IMR-90 (cell line): ENCODE measurements at regions of chrX and their contacts with region 1.

Region 1: GRCh38 chrX:80808160-80808735 is 1.4 kb downstream of the BRWD3 start:
- DNase-seq: peak; percentile 67
- ATAC-seq: peak; percentile 61
- H3K4me3 ChIP-seq: peak overlapping the region; percentile 100
- H3K27ac ChIP-seq: peak overlapping the region; percentile 99
- H3K4me1 ChIP-seq: no peaks in the 10 kb centered on the region
- H3K27me3 ChIP-seq: no peaks in the 10 kb centered on the region
- CTCF ChIP-seq: no peak
- POLR2A ChIP-seq: no peak
- RAD21 ChIP-seq: no peak

Region 2: DNA sequence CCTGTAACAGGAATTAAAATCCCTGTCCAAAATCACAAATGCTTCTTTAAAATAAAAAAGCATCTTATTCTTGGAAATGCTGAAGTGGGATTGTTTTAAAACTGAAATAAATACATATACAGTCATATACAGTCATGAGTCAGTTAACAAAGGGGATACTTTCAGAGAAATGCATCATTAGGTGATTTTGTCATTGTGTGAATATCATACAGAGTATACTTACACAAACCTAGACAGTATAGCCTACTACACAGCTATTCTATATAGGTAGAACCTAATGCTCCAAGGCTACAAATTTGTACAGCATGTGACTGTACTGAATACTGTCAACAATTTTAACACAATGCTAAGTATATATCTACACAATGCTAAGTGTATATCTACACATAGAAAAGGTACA is 102.9 kb before region 1 on chrX:
- CTCF ChIA-PET with region 1: no interaction called
- POLR2A ChIA-PET with region 1: no interaction called
- dilution Hi-C with region 1: no loop called
- in situ Hi-C with region 1: no loop called
- intact Hi-C with region 1: loop called (anchors 10 kb)
- DNase-seq: no peak
- ATAC-seq: no peak
- H3K4me3 ChIP-seq: no peak overlapping the region
- H3K27ac ChIP-seq: no peak overlapping the region
- H3K4me1 ChIP-seq: no peaks in the 10 kb centered on the region
- H3K27me3 ChIP-seq: no peaks in the 10 kb centered on the region
- CTCF ChIP-seq: no peak
- POLR2A ChIP-seq: no peak
- RAD21 ChIP-seq: no peak

Region 3: DNA sequence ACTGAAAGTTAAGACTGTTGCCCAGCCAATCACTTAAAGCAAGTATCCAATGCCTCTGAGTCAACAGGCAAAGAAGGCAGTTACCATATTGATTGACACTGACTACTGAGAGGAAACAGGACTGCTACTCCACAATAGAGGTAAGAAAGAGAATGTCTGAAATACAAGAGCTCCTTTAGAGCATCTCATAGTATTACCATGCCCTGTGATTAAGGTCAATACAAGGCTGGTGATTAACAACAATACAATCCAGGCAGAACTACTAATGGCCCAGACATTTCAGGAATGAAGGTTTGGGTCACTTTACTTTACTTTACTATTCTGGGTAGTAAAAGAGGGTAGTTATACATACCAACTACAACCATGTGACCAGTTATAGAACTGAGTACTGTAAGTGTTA is 43.1 kb before region 1 on chrX:
- CTCF ChIA-PET with region 1: no interaction called
- POLR2A ChIA-PET with region 1: no interaction called
- dilution Hi-C with region 1: no loop called
- in situ Hi-C with region 1: no loop called
- intact Hi-C with region 1: loop called (anchors 5 kb)
- DNase-seq: peak; percentile 77
- ATAC-seq: peak; percentile 97
- H3K4me3 ChIP-seq: no peak overlapping the region
- H3K27ac ChIP-seq: peak overlapping the region; percentile 23; the same call in 1 of the 2 replicates
- H3K4me1 ChIP-seq: no peaks in the 10 kb centered on the region
- H3K27me3 ChIP-seq: no peaks in the 10 kb centered on the region
- CTCF ChIP-seq: no peak
- POLR2A ChIP-seq: no peak
- RAD21 ChIP-seq: no peak

Region 4: DNA sequence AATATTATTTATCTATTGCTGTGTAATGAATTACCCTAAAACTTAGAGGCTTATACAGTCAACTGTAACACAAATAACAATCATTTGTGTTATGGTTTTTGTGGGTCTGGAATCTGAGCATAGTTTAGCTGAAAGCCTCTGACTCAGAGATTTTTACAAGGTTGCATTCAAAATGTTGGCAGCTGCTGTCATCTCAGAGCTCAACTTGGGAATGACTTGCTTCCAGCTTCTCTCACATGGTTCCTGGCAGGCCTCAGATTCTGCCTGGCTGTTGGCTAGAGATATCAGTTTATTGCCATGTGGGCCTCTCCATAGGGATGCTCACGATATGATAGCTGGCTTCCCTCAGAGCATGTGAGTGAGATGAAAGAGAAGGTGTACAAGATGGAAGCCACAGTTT is 71.7 kb after region 1 on chrX:
- CTCF ChIA-PET with region 1: no interaction called
- POLR2A ChIA-PET with region 1: no interaction called
- dilution Hi-C with region 1: no loop called
- in situ Hi-C with region 1: no loop called
- intact Hi-C with region 1: no loop called
- DNase-seq: peak; percentile 5
- ATAC-seq: peak; percentile 29
- H3K4me3 ChIP-seq: no peak overlapping the region
- H3K27ac ChIP-seq: no peak overlapping the region
- H3K4me1 ChIP-seq: no peaks in the 10 kb centered on the region
- H3K27me3 ChIP-seq: no peaks in the 10 kb centered on the region; the same call in 1 of the 2 replicates
- CTCF ChIP-seq: no peak
- POLR2A ChIP-seq: no peak
- RAD21 ChIP-seq: no peak

Region 5: GRCh38 chrX:81121513-81122382 is 313.5 kb after region 1 on chrX:
- CTCF ChIA-PET with region 1: no interaction called
- POLR2A ChIA-PET with region 1: no interaction called
- dilution Hi-C with region 1: no loop called
- in situ Hi-C with region 1: no loop called
- intact Hi-C with region 1: loop called (anchors 2 kb)
- DNase-seq: peak; percentile 90
- ATAC-seq: peak; percentile 96
- H3K4me3 ChIP-seq: peak overlapping the region; percentile 58
- H3K27ac ChIP-seq: no peak overlapping the region
- H3K4me1 ChIP-seq: no peaks in the 10 kb centered on the region
- H3K27me3 ChIP-seq: no peaks in the 10 kb centered on the region
- CTCF ChIP-seq: no peak
- POLR2A ChIP-seq: no peak
- RAD21 ChIP-seq: no peak